SK-MEL-5 (cell line): ENCODE measurements at regions of chr7 and their contacts with region 1.

Region 1: DNA sequence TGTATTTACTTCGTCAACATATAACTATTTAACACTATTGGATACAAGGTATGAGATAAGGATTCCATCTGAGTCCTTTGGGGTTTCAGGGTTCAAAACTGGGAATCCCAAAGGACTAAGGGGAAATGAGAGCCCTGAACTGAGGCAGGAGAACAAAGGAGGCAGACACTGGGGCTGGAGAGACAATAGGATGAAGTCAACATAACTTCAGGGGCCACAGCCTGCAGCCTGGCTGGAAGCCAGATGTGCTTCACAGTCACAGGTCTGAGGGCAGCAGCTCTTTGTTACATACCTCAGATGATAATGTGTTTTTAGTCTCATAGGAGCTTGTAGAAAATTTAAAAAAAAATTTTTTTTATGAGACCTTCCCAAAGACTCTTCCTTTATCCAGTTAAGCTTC is 73.3 kb downstream of the NRF1 start:
- DNase-seq: no peak

Region 2: GRCh38 chr7:129543816-129544215 is 141.0 kb before region 1 on chr7:
- in situ Hi-C with region 1: no loop called
- DNase-seq: no peak

Region 3: GRCh38 chr7:129635300-129636029 is 49.3 kb before region 1 on chr7:
- in situ Hi-C with region 1: no loop called
- DNase-seq: peak; percentile 91

Region 4: DNA sequence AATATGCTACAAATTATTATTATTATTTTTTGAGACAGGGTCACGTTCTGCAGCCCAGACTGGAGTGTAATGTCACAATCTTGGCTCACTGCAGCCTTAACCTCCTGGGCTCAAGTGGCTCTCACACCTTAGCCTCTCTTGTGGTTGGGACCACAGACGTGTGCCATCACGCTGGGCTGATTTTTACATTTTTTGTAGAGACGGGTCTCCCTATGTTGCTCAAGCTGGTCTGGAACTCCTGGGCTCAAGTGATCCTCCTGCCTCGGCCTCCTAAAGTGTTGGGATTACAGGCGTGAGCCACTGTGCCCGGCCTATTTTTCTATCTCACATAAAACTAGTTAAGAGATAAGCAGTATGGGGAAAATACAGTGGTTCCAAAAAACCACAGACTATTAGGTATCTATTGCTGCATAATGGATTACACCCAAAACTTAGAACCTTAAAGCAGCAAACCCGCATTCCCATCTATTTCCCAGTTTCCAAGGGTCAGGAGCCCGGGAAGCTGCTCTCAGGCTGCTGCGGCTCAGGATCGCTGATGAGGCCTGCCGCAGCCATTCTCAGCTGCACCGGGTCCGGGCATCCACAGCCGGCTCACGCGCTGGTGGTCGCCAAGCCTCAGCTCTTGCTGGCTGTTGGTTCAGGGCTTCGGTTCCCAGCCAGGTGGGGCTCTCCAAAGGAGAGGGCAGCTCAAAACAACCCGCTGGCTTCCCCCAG is 139.7 kb after region 1 on chr7:
- in situ Hi-C with region 1: loop called (anchors 25 kb)
- DNase-seq: no peak